Ascending aorta (tissue), 2 donors: ENCODE measurements at regions of chr3 and their contacts with region 1.

Region 1: DNA sequence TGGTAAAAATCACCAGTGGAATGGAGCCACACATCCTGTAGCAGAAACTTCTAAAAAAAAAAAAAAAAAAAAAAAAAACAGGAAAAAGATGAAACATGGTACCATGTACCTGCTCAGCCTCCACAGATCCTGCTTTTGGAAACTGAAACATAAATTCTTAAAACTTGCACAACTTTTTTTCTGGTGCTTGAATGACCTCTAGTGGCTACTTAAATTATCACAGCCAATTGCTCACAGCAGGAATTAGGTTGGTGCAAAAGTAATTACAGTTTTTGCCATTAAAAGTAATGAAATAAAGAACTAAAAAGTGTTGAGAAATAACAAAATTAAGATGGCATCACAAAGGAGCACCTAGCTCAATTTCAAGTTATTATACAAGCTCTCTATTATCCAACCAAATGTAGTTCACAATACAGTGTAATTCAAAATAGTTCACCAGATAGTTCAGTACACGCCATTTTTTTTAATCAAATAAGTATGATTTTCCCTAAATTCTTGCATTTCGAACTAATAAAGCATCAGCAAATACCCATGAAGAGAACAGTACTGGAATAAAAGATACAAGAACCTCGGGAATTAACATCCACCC is 80.6 kb downstream of the ULK4 start:
- DNase-seq: no peak
- H3K4me3 ChIP-seq: no peak overlapping the region
- H3K27ac ChIP-seq: no peak overlapping the region
- H3K4me1 ChIP-seq: no peaks in the 10 kb centered on the region
- H3K27me3 ChIP-seq: no peaks in the 10 kb centered on the region
- CTCF ChIP-seq: peak; percentile 60 to 70 (median 64)

Region 2: GRCh38 chr3:40329071-40329470 is 1552.3 kb before region 1 on chr3:
- intact Hi-C with region 1: loop called (anchors 2 kb)
- DNase-seq: no peak
- H3K4me3 ChIP-seq: no peak overlapping the region
- H3K27ac ChIP-seq: no peak overlapping the region
- H3K4me1 ChIP-seq: no peaks in the 10 kb centered on the region
- H3K27me3 ChIP-seq: no peaks in the 10 kb centered on the region
- CTCF ChIP-seq: no peak